ENCODE measurements at regions of chr13 and their contacts with region 1.

Region 1: DNA sequence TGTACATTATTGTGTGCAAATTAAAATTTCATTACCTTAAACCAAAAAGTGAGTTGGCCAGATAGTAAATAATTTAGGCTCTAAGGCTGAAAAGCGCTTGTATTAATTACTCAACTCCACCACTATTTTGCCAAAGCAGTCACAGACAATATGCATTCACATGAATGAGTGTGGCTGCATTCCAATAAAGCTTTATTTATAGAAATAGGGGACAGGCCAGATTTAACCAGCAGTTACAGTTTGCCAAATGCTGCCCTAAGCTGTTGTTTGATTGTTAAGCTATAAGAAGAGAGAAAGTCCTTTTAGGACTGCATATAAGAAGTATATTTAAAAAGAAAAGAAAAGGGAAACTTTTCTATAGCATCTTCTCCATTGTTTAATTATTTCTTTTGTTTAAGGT is 342.6 kb downstream of the ITGBL1 start:
- DNase-seq: no peak
- ATAC-seq: no peak
- H3K4me3 ChIP-seq: no peak overlapping the region
- H3K27ac ChIP-seq: no peak overlapping the region
- H3K4me1 ChIP-seq: no peaks in the 10 kb centered on the region
- H3K27me3 ChIP-seq: no peaks in the 10 kb centered on the region
- CTCF ChIP-seq: no peak

Region 2: DNA sequence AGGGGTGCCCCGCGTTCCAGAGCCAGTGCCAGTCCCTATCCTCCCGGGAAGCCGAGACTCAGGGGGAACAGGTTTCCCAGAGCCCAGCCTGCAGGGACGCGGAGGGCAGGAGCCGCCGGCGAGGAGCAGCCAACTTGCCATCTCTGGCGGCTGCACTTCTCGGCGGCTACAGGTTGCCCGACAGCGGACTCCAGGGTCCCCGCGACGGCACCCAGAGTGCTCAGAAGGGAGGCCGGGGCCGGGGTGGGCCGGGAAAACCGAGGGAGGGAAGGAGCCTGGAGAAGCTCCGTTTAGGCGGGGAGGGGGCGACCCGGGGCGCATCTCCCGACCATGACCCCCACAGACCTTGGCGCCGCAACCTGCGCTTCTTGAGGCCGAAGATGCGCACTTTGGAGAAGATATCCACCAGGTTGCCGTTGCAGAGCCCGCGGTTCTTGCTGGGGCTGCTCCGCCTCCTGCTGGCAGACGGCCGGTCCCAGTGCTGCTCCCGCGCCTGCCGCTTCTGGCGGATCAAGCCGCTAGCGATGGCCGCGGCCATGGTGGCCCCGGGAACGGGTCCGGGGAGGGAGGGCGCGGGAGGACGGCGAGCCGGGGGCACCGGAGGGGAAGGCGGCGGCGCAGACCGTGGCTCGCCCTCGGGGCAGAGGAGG is 121.2 kb after region 1 on chr13:
- intact Hi-C with region 1: no loop called
- DNase-seq: no peak
- ATAC-seq: peak; percentile 11 to 42
- H3K4me3 ChIP-seq: peak overlapping the region; percentile 31
- H3K27ac ChIP-seq: no peak overlapping the region
- H3K4me1 ChIP-seq: peaks cover 4% of the 10 kb centered on the region
- H3K27me3 ChIP-seq: peaks cover 50% of the 10 kb centered on the region
- CTCF ChIP-seq: no peak

Region 3: GRCh38 chr13:103097366-103097928 is 1302.4 kb after region 1 on chr13:
- intact Hi-C with region 1: loop called (anchors 10 kb)
- DNase-seq: no peak
- ATAC-seq: no peak
- H3K4me3 ChIP-seq: no peak overlapping the region
- H3K27ac ChIP-seq: no peak overlapping the region
- H3K4me1 ChIP-seq: no peaks in the 10 kb centered on the region
- H3K27me3 ChIP-seq: no peaks in the 10 kb centered on the region
- CTCF ChIP-seq: no peak